CD8-positive, alpha-beta T cell (primary cell): ENCODE measurements at regions of chr7 and their contacts with region 1.

Region 1: DNA sequence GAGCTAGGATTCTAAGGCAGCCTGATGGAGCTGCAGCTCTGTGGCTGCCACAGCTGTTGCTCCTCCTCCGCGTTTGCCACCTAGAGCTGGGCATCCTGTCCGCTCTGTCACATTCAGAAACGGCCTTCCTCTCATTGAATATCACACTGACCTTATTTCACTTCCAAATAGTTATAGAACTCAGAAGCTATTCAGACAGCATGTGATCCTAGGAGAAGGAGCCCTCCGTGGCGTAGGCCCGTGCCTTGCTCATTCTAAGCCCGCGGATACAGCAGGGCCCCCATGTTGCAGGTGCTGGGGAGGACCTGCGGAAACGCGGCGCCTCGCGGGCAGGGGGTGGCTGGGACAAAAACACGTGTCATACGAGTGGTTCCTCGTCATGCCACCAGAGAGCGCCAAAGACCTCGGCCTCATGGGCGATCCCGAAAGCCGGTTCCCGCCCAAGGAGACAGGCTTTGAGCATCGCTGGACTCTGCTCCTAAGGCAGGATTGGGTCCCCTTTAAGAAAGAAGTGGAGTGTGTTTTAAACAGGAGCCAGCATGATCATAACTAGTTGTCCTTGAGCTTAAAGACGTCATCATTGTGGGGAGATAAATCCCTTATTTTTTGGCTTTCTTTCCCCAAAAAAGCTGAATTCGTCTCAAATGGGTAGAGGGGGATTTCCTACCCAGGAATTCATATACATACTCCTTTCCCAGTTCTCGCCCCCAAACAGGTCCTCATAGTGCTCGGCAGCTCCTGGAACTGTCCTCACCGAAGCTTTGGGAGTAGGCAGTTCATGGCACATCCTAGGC is 17.9 kb upstream of the FIGNL1 start:
- DNase-seq: peak; percentile 54 to 88 (median 77)
- ATAC-seq: peak; percentile 98
- H3K4me3 ChIP-seq: peak overlapping the region; percentile 1 to 12
- H3K4me3 Mint-ChIP-seq: peak overlapping the region; percentile 63
- H3K27ac ChIP-seq: no peak overlapping the region
- H3K27ac Mint-ChIP-seq: no peak overlapping the region
- H3K4me1 ChIP-seq: peaks cover 4% of the 10 kb centered on the region
- H3K4me1 Mint-ChIP-seq: peaks cover 11% of the 10 kb centered on the region
- H3K27me3 ChIP-seq: no peaks in the 10 kb centered on the region
- H3K27me3 Mint-ChIP-seq: no peaks in the 10 kb centered on the region
- CTCF ChIP-seq: peak; percentile 91

Region 2: DNA sequence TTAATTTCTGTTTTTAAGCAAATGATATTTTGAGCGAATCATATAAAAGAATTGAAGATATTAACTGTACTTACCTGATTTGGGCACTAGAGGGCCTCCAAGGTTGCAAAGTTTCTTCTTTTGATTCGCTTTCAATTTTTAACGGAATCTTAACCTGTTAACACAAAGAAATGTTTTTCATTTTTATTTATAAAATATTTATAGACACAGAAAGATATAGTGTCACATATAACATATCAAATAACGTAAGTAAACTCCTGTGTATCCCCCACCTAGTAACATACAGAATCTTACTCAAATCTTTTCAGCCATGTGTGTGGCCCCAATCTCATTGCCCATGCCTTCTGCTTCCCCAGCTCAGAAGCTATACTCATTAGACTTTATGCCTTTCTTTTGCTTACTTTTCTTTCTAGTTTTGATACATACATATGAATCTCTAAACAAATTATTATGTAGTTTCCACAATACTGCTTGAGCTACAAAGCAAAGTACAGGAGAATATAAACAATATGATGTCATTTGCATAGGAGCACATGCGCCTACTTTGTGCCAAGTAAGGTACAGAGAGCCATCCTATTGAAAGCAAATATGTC is 325.5 kb before region 1 on chr7:
- CTCF ChIA-PET with region 1: interaction called, 3 read pairs
- POLR2A ChIA-PET with region 1: no interaction called
- intact Hi-C with region 1: loop called in 1 of 2 experiments (anchors 1 kb)
- DNase-seq: peak in 4 of 9 experiments; percentile 38 to 78 (median 59)
- ATAC-seq: peak; percentile 85
- H3K4me3 ChIP-seq: no peak overlapping the region
- H3K4me3 Mint-ChIP-seq: peak overlapping the region; percentile 57
- H3K27ac ChIP-seq: no peak overlapping the region
- H3K27ac Mint-ChIP-seq: peak overlapping the region; percentile 84
- H3K4me1 ChIP-seq: peaks cover 5% of the 10 kb centered on the region
- H3K4me1 Mint-ChIP-seq: peaks cover 15% of the 10 kb centered on the region
- H3K27me3 ChIP-seq: no peaks in the 10 kb centered on the region
- H3K27me3 Mint-ChIP-seq: no peaks in the 10 kb centered on the region
- CTCF ChIP-seq: peak; percentile 91

Region 3: GRCh38 chr7:50431316-50431715 is 36.7 kb before region 1 on chr7:
- CTCF ChIA-PET with region 1: no interaction called
- POLR2A ChIA-PET with region 1: no interaction called
- intact Hi-C with region 1: no loop called
- DNase-seq: no peak
- ATAC-seq: no peak
- H3K4me3 ChIP-seq: no peak overlapping the region
- H3K4me3 Mint-ChIP-seq: no peak overlapping the region
- H3K27ac ChIP-seq: no peak overlapping the region
- H3K27ac Mint-ChIP-seq: no peak overlapping the region
- H3K4me1 ChIP-seq: no peaks in the 10 kb centered on the region
- H3K4me1 Mint-ChIP-seq: no peaks in the 10 kb centered on the region
- H3K27me3 ChIP-seq: no peaks in the 10 kb centered on the region
- H3K27me3 Mint-ChIP-seq: no peaks in the 10 kb centered on the region
- CTCF ChIP-seq: no peak

Region 4: DNA sequence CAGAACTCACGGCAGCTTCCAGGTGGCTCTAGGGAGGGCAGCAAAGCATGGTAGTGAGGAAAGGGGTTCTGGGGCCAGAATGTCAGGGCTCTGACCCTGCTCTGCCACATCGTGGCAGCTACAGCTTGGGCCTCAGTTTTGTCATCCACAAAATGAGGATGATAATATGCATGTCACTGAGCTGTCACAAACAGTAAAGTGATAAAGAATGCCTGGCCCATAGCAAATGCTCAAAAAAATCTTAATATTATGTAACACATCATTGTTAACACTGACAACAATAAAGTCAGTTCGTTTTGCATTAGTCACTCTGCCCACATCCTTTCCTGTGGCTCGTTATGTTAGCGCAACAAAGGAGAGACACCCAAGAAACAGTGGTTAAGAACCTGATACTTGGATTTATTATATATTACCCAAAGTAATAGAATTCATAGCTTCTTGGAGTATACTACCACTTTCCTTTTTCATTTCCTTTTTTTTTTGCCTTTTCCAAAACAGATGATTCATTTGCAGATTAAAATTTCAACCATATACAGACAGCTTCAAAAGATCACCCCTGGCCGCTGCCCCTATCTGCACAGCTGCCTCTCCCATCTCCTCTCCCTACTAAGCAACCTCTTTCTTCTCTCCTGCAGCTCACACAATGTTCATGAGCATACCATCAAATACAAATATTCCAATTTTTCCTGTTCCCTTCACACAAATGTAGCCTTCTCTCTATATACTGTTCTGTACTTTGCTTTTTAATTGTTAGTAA is 142.7 kb after region 1 on chr7:
- CTCF ChIA-PET with region 1: interaction called, 12 read pairs
- POLR2A ChIA-PET with region 1: no interaction called
- intact Hi-C with region 1: no loop called
- DNase-seq: peak; percentile 17 to 81 (median 60)
- ATAC-seq: peak; percentile 84
- H3K4me3 ChIP-seq: no peak overlapping the region
- H3K4me3 Mint-ChIP-seq: peak overlapping the region; percentile 21
- H3K27ac ChIP-seq: peak overlapping the region; percentile 39 to 53
- H3K27ac Mint-ChIP-seq: peak overlapping the region; percentile 68
- H3K4me1 ChIP-seq: peaks cover 18% of the 10 kb centered on the region
- H3K4me1 Mint-ChIP-seq: peaks cover 39% of the 10 kb centered on the region
- H3K27me3 ChIP-seq: no peaks in the 10 kb centered on the region
- H3K27me3 Mint-ChIP-seq: no peaks in the 10 kb centered on the region
- CTCF ChIP-seq: no peak

Region 5: DNA sequence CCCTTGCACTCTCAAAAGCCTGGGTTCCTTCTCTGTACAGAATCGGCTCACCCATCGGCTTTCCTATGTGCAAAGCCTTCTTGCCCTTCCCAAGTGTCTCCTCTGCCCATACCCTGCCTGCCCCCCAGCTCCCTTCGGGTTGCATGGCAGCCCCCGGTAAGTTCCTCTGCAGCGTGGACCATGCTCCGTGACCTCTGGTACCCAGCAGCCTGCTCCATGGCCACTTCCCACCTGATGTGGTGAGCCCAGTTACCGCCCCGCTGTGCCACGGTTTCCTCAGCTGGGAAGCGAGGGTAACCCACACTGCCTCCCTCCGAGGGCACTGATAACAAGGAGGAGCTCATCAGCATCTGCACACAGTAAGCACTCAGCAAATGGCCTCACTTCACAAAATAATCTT is 204.0 kb after region 1 on chr7:
- CTCF ChIA-PET with region 1: interaction called, 85 read pairs
- POLR2A ChIA-PET with region 1: no interaction called
- intact Hi-C with region 1: no loop called
- DNase-seq: no peak
- ATAC-seq: no peak
- H3K4me3 ChIP-seq: no peak overlapping the region
- H3K4me3 Mint-ChIP-seq: no peak overlapping the region
- H3K27ac ChIP-seq: no peak overlapping the region
- H3K27ac Mint-ChIP-seq: no peak overlapping the region
- H3K4me1 ChIP-seq: no peaks in the 10 kb centered on the region
- H3K4me1 Mint-ChIP-seq: no peaks in the 10 kb centered on the region
- H3K27me3 ChIP-seq: no peaks in the 10 kb centered on the region
- H3K27me3 Mint-ChIP-seq: no peaks in the 10 kb centered on the region
- CTCF ChIP-seq: no peak

Region 6: DNA sequence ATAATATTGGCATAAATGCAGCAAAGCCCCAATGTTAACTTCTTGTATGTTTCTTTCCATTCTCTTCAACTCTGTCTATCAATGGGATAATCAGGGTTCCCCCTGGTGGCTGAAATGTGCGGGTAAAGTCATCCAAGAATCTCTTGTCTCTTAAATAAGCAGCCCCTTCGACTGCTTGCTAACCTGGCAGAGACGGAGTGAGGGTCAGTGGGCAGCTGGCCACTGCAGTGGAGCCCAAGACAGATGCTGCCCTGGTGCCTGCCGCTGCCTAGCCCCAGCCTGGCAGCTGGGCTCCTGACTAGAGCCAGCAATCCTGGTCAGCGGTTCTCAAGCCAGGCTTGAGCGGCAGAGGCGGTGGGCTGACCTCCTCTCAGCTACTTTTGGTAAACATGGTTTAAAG is 599.7 kb after region 1 on chr7:
- CTCF ChIA-PET with region 1: no interaction called
- POLR2A ChIA-PET with region 1: no interaction called
- intact Hi-C with region 1: loop called in 1 of 2 experiments (anchors 5 kb)
- DNase-seq: peak in 7 of 9 experiments; percentile 9 to 53 (median 43)
- ATAC-seq: no peak
- H3K4me3 ChIP-seq: no peak overlapping the region
- H3K4me3 Mint-ChIP-seq: no peak overlapping the region
- H3K27ac ChIP-seq: no peak overlapping the region
- H3K27ac Mint-ChIP-seq: no peak overlapping the region
- H3K4me1 ChIP-seq: no peaks in the 10 kb centered on the region
- H3K4me1 Mint-ChIP-seq: no peaks in the 10 kb centered on the region
- H3K27me3 ChIP-seq: no peaks in the 10 kb centered on the region
- H3K27me3 Mint-ChIP-seq: no peaks in the 10 kb centered on the region
- CTCF ChIP-seq: peak; percentile 54

Region 7: GRCh38 chr7:51162724-51163329 is 694.8 kb after region 1 on chr7:
- CTCF ChIA-PET with region 1: interaction called, 41 read pairs
- POLR2A ChIA-PET with region 1: interaction called, 3 read pairs
- intact Hi-C with region 1: loop called in 1 of 2 experiments (anchors 1 kb)
- DNase-seq: peak; percentile 16 to 70 (median 54)
- ATAC-seq: peak; percentile 54
- H3K4me3 ChIP-seq: no peak overlapping the region
- H3K4me3 Mint-ChIP-seq: no peak overlapping the region
- H3K27ac ChIP-seq: no peak overlapping the region
- H3K27ac Mint-ChIP-seq: no peak overlapping the region
- H3K4me1 ChIP-seq: no peaks in the 10 kb centered on the region
- H3K4me1 Mint-ChIP-seq: peaks cover 6% of the 10 kb centered on the region
- H3K27me3 ChIP-seq: no peaks in the 10 kb centered on the region
- H3K27me3 Mint-ChIP-seq: peaks cover 19% of the 10 kb centered on the region
- CTCF ChIP-seq: peak; percentile 71